K562 (cell line): ENCODE measurements at regions of chr17 and their contacts with region 1.

Region 1: DNA sequence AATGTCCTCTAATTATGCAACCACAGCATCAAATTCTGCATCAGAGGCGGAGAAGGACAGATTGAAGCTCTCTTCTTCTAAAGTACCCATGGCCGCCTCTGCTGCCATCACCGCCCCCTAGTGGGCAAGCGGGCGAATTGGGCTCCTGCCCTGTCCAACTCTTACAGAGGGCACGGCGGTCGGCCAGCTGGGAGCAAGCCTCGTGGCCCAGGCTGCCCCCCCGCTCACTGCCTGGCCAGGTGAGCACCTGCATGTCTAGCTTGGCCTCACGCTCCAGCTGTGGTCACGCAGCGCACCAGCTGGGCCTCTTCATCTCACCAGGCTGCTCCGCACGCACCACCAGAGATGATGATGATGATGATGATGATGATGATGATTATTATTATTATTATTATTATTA is 146.1 kb upstream of the TOM1L1 start:
- DNase-seq: peak; percentile 35 to 47 (median 43)
- ATAC-seq: peak; percentile 88
- H3K4me3 ChIP-seq: no peak overlapping the region
- H3K27ac ChIP-seq: no peak overlapping the region
- H3K4me1 ChIP-seq: peaks cover 0 to 3% of the 10 kb centered on the region in 2 experiments; a peak in 1 of 5 replicates
- H3K27me3 ChIP-seq: no peaks in the 10 kb centered on the region
- CTCF ChIP-seq: peak; percentile 43 to 72 (median 48); a peak in 5 of 6 replicates
- EP300 ChIP-seq: no peak
- POLR2A ChIP-seq: no peak
- RAD21 ChIP-seq: peak; percentile 11 to 56; a peak in 2 of 4 replicates

Region 2: GRCh38 chr17:54891176-54891821 is 136.7 kb after region 1 on chr17:
- CTCF ChIA-PET with region 1: no interaction called
- POLR2A ChIA-PET with region 1: no interaction called
- in situ Hi-C with region 1: no loop called
- intact Hi-C with region 1: loop called (anchors 5 kb)
- DNase-seq: peak; percentile 72 to 77 (median 74)
- ATAC-seq: peak; percentile 96
- H3K4me3 ChIP-seq: no peak overlapping the region
- H3K27ac ChIP-seq: no peak overlapping the region
- H3K4me1 ChIP-seq: no peaks in the 10 kb centered on the region; a peak in 3 of 5 replicates
- H3K27me3 ChIP-seq: no peaks in the 10 kb centered on the region
- CTCF ChIP-seq: peak; percentile 28 to 69 (median 53); a peak in 5 of 6 replicates
- EP300 ChIP-seq: no peak
- POLR2A ChIP-seq: no peak
- RAD21 ChIP-seq: peak; percentile 91 to 92